Mammary epithelial cell (primary cell): ENCODE measurements at regions of chr20 and their contacts with region 1.

Region 1: GRCh38 chr20:34458631-34459030 is 57.6 kb upstream of the DYNLRB1 start:
- DNase-seq: no peak
- H3K4me3 ChIP-seq: no peak overlapping the region
- H3K27ac ChIP-seq: no peak overlapping the region
- H3K4me1 ChIP-seq: no peaks in the 10 kb centered on the region
- H3K27me3 ChIP-seq: no peaks in the 10 kb centered on the region
- CTCF ChIP-seq: no peak

Region 2: DNA sequence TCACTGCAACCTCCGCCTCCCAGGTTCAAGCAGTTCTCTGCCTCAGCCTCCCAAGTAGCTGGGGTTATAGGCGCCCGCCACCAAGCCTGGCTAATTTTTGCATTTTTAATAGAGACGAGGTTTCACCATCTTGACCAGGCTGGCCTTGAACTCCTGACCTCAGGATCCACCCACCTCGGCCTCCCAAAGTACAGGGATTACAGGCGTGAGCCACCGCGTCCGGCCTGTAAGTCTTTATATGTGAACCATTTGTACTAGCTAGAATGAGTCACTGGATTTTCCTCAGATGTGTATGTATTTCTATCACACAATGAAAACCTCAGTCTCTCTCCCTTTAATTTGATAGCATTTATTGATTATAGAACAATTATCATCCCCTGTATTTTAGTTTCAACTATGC is 61.5 kb before region 1 on chr20:
- CTCF ChIA-PET with region 1: no interaction called
- dilution Hi-C with region 1: no loop called
- in situ Hi-C with region 1: no loop called
- intact Hi-C with region 1: no loop called
- DNase-seq: peak; percentile 14
- H3K4me3 ChIP-seq: no peak overlapping the region
- H3K27ac ChIP-seq: no peak overlapping the region
- H3K4me1 ChIP-seq: peaks cover 21% of the 10 kb centered on the region
- H3K27me3 ChIP-seq: no peaks in the 10 kb centered on the region
- CTCF ChIP-seq: no peak

Region 3: DNA sequence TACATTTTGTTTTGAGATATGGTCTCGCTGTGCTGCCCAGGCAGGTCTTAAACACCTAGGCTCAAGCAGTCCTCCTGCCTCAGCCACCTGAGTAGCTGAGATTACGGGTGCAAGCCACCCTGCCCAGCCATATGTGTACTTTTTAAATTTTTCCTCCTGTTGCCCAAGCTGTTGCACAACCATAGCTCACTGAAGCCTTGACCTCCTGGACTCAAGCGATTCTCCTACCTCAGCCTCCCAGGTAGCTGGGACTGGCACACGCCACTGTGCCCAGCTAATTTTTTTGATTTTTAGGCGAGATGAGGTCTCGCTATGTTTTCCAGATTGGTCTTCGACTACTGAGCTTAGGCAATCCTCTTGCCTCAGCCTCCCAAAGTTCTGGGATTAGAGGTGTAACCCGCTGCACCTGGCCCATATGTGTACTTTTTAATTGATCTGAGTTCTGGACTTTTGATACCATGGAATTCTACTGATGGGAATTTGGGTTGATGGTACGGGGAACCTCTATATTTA is 50.6 kb before region 1 on chr20:
- CTCF ChIA-PET with region 1: no interaction called
- dilution Hi-C with region 1: loop called (anchors 5 kb)
- in situ Hi-C with region 1: no loop called
- intact Hi-C with region 1: no loop called
- DNase-seq: no peak
- H3K4me3 ChIP-seq: no peak overlapping the region
- H3K27ac ChIP-seq: no peak overlapping the region
- H3K4me1 ChIP-seq: peaks cover 4% of the 10 kb centered on the region
- H3K27me3 ChIP-seq: no peaks in the 10 kb centered on the region
- CTCF ChIP-seq: no peak

Region 4: GRCh38 chr20:34516247-34517113 is 57.8 kb after region 1 on chr20 and contains the start of gene DYNLRB1:
- CTCF ChIA-PET with region 1: no interaction called
- dilution Hi-C with region 1: loop called (anchors 5 kb)
- in situ Hi-C with region 1: no loop called
- intact Hi-C with region 1: no loop called
- DNase-seq: peak; percentile 91
- H3K4me3 ChIP-seq: peak within 1 kb of the TSS; percentile 63 to 89 (median 85)
- H3K27ac ChIP-seq: peak within 1 kb of the TSS; percentile 73
- H3K4me1 ChIP-seq: peaks cover 20% of the 10 kb centered on the region
- H3K27me3 ChIP-seq: no peaks in the 10 kb centered on the region
- CTCF ChIP-seq: no peak
- total RNA-seq, gene DYNLRB1: 55.5 to 95.6 TPM